Panc1 (cell line): ENCODE measurements at regions of chr19 and their contacts with region 1.

Region 1: GRCh38 chr19:39765091-39766076 is 13.3 kb upstream of the LEUTX start:
- DNase-seq: peak; percentile 89
- ATAC-seq: peak; percentile 76
- H3K4me3 ChIP-seq: no peak overlapping the region
- H3K27ac ChIP-seq: no peak overlapping the region
- H3K4me1 ChIP-seq: no peaks in the 10 kb centered on the region
- H3K27me3 ChIP-seq: peaks cover 42% of the 10 kb centered on the region
- CTCF ChIP-seq: no peak

Region 2: GRCh38 chr19:39001041-39001440 is 764.3 kb before region 1 on chr19:
- CTCF ChIA-PET with region 1: interaction called, 10 read pairs
- POLR2A ChIA-PET with region 1: no interaction called
- in situ Hi-C with region 1: no loop called
- intact Hi-C with region 1: no loop called
- DNase-seq: no peak
- ATAC-seq: peak; percentile 44
- H3K4me3 ChIP-seq: no peak overlapping the region
- H3K27ac ChIP-seq: no peak overlapping the region
- H3K4me1 ChIP-seq: no peaks in the 10 kb centered on the region
- H3K27me3 ChIP-seq: no peaks in the 10 kb centered on the region
- CTCF ChIP-seq: no peak

Region 3: GRCh38 chr19:39532233-39533002 is 233.0 kb before region 1 on chr19 and contains the start of gene EID2B:
- CTCF ChIA-PET with region 1: interaction called, 14 read pairs
- POLR2A ChIA-PET with region 1: interaction called, 5 read pairs
- in situ Hi-C with region 1: no loop called
- intact Hi-C with region 1: no loop called
- DNase-seq: peak; percentile 100
- ATAC-seq: peak; percentile 95
- H3K4me3 ChIP-seq: peak within 1 kb of the TSS; percentile 35 to 56
- H3K27ac ChIP-seq: peak within 1 kb of the TSS; percentile 80
- H3K4me1 ChIP-seq: peaks cover 25% of the 10 kb centered on the region
- H3K27me3 ChIP-seq: no peaks in the 10 kb centered on the region
- CTCF ChIP-seq: no peak
- total RNA-seq, gene EID2B: 37.7 TPM

Region 4: GRCh38 chr19:39641773-39642172 is 123.6 kb before region 1 on chr19:
- CTCF ChIA-PET with region 1: no interaction called
- POLR2A ChIA-PET with region 1: no interaction called
- in situ Hi-C with region 1: no loop called
- intact Hi-C with region 1: no loop called
- DNase-seq: no peak
- ATAC-seq: no peak
- H3K4me3 ChIP-seq: no peak overlapping the region
- H3K27ac ChIP-seq: no peak overlapping the region
- H3K4me1 ChIP-seq: no peaks in the 10 kb centered on the region
- H3K27me3 ChIP-seq: peaks cover 86% of the 10 kb centered on the region
- CTCF ChIP-seq: peak; percentile 40; the same call in 1 of the 2 replicates

Region 5: GRCh38 chr19:39671738-39672363 is 93.5 kb before region 1 on chr19:
- CTCF ChIA-PET with region 1: interaction called, 15 read pairs
- POLR2A ChIA-PET with region 1: interaction called, 4 read pairs
- in situ Hi-C with region 1: no loop called
- intact Hi-C with region 1: loop called (anchors 2 kb)
- DNase-seq: peak; percentile 100
- ATAC-seq: peak; percentile 95
- H3K4me3 ChIP-seq: no peak overlapping the region
- H3K27ac ChIP-seq: no peak overlapping the region
- H3K4me1 ChIP-seq: peaks cover 11% of the 10 kb centered on the region
- H3K27me3 ChIP-seq: peaks cover 57% of the 10 kb centered on the region
- CTCF ChIP-seq: no peak

Region 6: GRCh38 chr19:39805104-39805503 is 39.7 kb after region 1 on chr19:
- CTCF ChIA-PET with region 1: interaction called, 18 read pairs
- POLR2A ChIA-PET with region 1: interaction called, 6 read pairs
- in situ Hi-C with region 1: no loop called
- intact Hi-C with region 1: no loop called
- DNase-seq: no peak
- ATAC-seq: no peak
- H3K4me3 ChIP-seq: no peak overlapping the region
- H3K27ac ChIP-seq: no peak overlapping the region
- H3K4me1 ChIP-seq: peaks cover 6% of the 10 kb centered on the region; the same call in 1 of the 2 replicates
- H3K27me3 ChIP-seq: peaks cover 29% of the 10 kb centered on the region
- CTCF ChIP-seq: no peak

Region 7: GRCh38 chr19:39858541-39858940 is 93.2 kb after region 1 on chr19:
- CTCF ChIA-PET with region 1: no interaction called
- POLR2A ChIA-PET with region 1: no interaction called
- in situ Hi-C with region 1: no loop called
- intact Hi-C with region 1: no loop called
- DNase-seq: no peak
- ATAC-seq: peak; percentile 13; the same call in 1 of the 2 replicates
- H3K4me3 ChIP-seq: no peak overlapping the region
- H3K27ac ChIP-seq: no peak overlapping the region
- H3K4me1 ChIP-seq: peaks cover 4% of the 10 kb centered on the region
- H3K27me3 ChIP-seq: no peaks in the 10 kb centered on the region
- CTCF ChIP-seq: no peak

Region 8: GRCh38 chr19:39906820-39907611 is 141.6 kb after region 1 on chr19:
- CTCF ChIA-PET with region 1: interaction called, 10 read pairs
- POLR2A ChIA-PET with region 1: interaction called, 3 read pairs
- in situ Hi-C with region 1: no loop called
- intact Hi-C with region 1: no loop called
- DNase-seq: no peak
- ATAC-seq: no peak
- H3K4me3 ChIP-seq: no peak overlapping the region
- H3K27ac ChIP-seq: no peak overlapping the region
- H3K4me1 ChIP-seq: no peaks in the 10 kb centered on the region
- H3K27me3 ChIP-seq: peaks cover 3% of the 10 kb centered on the region; the same call in 1 of the 2 replicates
- CTCF ChIP-seq: no peak

Region 9: DNA sequence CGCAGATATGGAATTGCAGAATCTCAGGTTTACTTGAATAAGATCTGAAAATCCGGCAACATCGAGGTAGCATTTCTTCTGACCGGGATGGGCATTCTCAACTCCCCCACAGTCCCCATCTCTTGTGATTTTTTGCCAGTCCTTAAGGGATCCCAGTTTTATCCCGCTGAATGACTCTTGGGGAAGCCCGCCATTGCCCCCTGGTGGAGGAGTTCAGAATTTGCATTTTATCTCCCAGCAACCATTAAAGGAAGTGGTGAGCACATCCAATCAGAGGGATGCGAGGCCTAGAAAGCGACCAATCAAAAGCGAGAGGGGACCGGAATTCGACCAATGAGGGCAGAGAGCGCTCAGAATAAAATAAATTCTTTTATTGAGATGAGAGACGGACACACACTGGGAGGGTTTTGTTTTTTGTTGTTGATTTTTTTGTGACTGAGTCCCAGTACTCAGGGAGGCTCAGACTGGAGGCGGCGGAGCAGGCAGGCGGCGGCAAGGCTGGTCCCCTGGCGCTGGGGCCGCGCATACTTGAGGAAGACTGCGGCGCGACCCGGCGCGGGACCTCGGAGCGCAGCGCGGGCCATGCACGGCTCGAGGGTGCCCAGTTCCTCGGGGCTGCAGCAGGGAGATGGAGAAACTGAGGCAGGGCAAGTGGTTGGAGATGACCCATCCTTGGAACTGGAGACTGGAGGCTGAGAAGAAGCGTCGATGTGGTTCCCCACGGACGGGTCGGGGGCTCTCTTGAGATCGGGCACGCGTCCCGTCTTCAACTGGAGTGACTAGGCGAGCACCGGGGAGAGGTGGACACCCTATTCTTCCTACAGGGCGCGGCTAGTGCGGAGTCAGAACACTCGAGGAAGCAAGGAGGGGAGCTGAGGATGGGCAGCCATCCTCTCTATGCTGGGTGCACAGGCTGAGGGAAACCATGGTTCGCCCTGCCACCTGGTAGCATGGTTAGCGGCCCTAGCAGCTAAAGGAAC is 456.8 kb after region 1 on chr19:
- CTCF ChIA-PET with region 1: interaction called, 6 read pairs
- POLR2A ChIA-PET with region 1: interaction called, 15 read pairs
- in situ Hi-C with region 1: no loop called
- intact Hi-C with region 1: no loop called
- DNase-seq: peak; percentile 100
- ATAC-seq: peak; percentile 23
- H3K4me3 ChIP-seq: no peak overlapping the region
- H3K27ac ChIP-seq: no peak overlapping the region
- H3K4me1 ChIP-seq: peaks cover 39% of the 10 kb centered on the region
- H3K27me3 ChIP-seq: peaks cover 26% of the 10 kb centered on the region
- CTCF ChIP-seq: no peak